Activated CD4-positive, alpha-beta memory T cell treated with anti-CD3 and anti-CD28 coated beads for 36 hours (primary cell): ENCODE measurements at regions of chr7 and their contacts with region 1.

Region 1: GRCh38 chr7:99558306-99559174 is at the start of gene ZNF655:
- DNase-seq: peak; percentile 92
- H3K4me3 Mint-ChIP-seq: peak within 1 kb of the TSS; percentile 97
- H3K27ac Mint-ChIP-seq: peak within 1 kb of the TSS; percentile 97
- H3K4me1 Mint-ChIP-seq: peaks cover 43% of the 10 kb centered on the region
- H3K27me3 Mint-ChIP-seq: no peaks in the 10 kb centered on the region
- total RNA-seq, gene ZNF655: 47.9 to 49.8 TPM

Region 2: DNA sequence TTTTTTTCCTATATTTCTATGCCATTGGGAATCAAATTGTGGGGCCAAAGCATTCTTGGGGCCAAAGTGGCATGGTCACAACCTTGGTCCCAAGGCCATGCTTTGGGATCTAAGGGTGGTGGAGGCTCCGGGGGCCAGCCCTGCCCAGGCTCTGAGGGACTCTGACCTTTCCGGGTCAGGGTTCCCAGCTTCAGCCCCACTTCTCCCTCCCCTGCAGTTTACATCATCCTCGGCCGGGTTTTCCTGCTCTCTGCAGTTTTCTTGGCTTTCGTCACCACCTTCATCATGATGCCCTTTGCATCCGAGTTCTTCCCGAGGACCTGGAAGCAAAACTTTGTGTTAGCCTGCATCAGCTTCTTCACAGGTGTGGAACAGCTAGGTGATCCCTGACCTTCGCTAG is 48.0 kb after region 1 on chr7:
- CTCF ChIA-PET with region 1: no interaction called
- POLR2A ChIA-PET with region 1: no interaction called
- intact Hi-C with region 1: no loop called
- DNase-seq: no peak
- H3K4me3 Mint-ChIP-seq: no peak overlapping the region
- H3K27ac Mint-ChIP-seq: no peak overlapping the region
- H3K4me1 Mint-ChIP-seq: no peaks in the 10 kb centered on the region
- H3K27me3 Mint-ChIP-seq: no peaks in the 10 kb centered on the region

Region 3: GRCh38 chr7:99616359-99617191 is 58.0 kb after region 1 on chr7 and contains the start of gene ZSCAN25:
- CTCF ChIA-PET with region 1: no interaction called
- POLR2A ChIA-PET with region 1: interaction called, 11 read pairs
- intact Hi-C with region 1: loop called (anchors 2 kb)
- DNase-seq: peak; percentile 91
- H3K4me3 Mint-ChIP-seq: peak within 1 kb of the TSS; percentile 95
- H3K27ac Mint-ChIP-seq: peak within 1 kb of the TSS; percentile 92
- H3K4me1 Mint-ChIP-seq: peaks cover 43% of the 10 kb centered on the region
- H3K27me3 Mint-ChIP-seq: no peaks in the 10 kb centered on the region
- total RNA-seq, gene ZSCAN25: 15.9 to 20.3 TPM

Region 4: DNA sequence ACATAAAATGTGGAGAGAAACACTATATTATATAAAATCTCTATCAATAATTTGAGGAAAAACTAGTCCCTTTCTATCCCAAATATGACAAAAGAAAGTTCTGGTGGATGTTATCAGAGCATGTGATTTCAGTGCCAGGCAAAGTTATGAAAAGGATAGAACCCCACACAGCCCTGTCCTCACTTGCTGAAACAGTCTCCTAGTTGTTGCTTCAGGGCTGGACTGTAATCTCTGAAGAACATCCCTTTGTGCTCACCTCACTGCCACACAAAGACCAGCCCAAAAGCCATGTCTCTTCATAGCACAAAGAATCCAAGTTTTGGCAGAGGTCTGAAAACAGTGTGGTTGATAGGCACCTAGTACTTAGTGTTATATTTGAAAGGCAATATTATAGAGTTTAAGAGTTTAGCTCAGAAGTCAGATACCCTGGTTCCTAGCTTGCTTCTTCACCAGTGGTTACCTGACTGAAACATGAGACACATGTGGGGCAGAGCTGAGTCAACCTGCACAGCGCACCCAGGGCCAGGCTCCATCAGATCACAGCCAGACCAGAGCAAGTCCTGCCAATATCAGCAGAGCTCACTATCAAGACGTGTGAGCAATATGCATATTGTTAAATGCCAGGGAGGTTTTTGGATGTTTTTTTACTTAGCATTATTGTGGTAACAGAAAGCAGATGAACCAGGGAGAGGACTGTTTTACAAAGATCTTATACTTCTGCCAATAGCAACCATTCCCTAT is 151.5 kb after region 1 on chr7:
- CTCF ChIA-PET with region 1: no interaction called
- POLR2A ChIA-PET with region 1: no interaction called
- intact Hi-C with region 1: no loop called
- DNase-seq: no peak
- H3K4me3 Mint-ChIP-seq: no peak overlapping the region
- H3K27ac Mint-ChIP-seq: no peak overlapping the region
- H3K4me1 Mint-ChIP-seq: no peaks in the 10 kb centered on the region
- H3K27me3 Mint-ChIP-seq: no peaks in the 10 kb centered on the region

Region 5: GRCh38 chr7:99772565-99772964 is 214.0 kb after region 1 on chr7:
- CTCF ChIA-PET with region 1: no interaction called
- POLR2A ChIA-PET with region 1: no interaction called
- intact Hi-C with region 1: no loop called
- DNase-seq: no peak
- H3K4me3 Mint-ChIP-seq: no peak overlapping the region
- H3K27ac Mint-ChIP-seq: no peak overlapping the region
- H3K4me1 Mint-ChIP-seq: peaks cover 3% of the 10 kb centered on the region
- H3K27me3 Mint-ChIP-seq: peaks cover 54% of the 10 kb centered on the region